CD4-positive, alpha-beta T cell (primary cell): ENCODE measurements at regions of chr14 and their contacts with region 1.

Region 1: GRCh38 chr14:39015360-39015961 is 87.6 kb downstream of the SEC23A start:
- DNase-seq: peak in 4 of 14 experiments; percentile 13 to 50 (median 29)
- ATAC-seq: peak; percentile 55
- H3K4me3 ChIP-seq: no peak overlapping the region
- H3K4me3 Mint-ChIP-seq: no peak overlapping the region
- H3K27ac ChIP-seq: no peak overlapping the region
- H3K27ac Mint-ChIP-seq: no peak overlapping the region
- H3K4me1 ChIP-seq: no peaks in the 10 kb centered on the region
- H3K4me1 Mint-ChIP-seq: no peaks in the 10 kb centered on the region
- H3K27me3 ChIP-seq: no peaks in the 10 kb centered on the region
- H3K27me3 Mint-ChIP-seq: no peaks in the 10 kb centered on the region
- CTCF ChIP-seq: peak; percentile 68

Region 2: GRCh38 chr14:37246427-37246914 is 1769.0 kb before region 1 on chr14:
- CTCF ChIA-PET with region 1: no interaction called
- POLR2A ChIA-PET with region 1: no interaction called
- intact Hi-C with region 1: loop called (anchors 10 kb)
- DNase-seq: peak in 3 of 14 experiments; percentile 24 to 28 (median 25)
- ATAC-seq: no peak
- H3K4me3 ChIP-seq: no peak overlapping the region
- H3K4me3 Mint-ChIP-seq: no peak overlapping the region
- H3K27ac ChIP-seq: no peak overlapping the region
- H3K27ac Mint-ChIP-seq: no peak overlapping the region
- H3K4me1 ChIP-seq: no peaks in the 10 kb centered on the region
- H3K4me1 Mint-ChIP-seq: no peaks in the 10 kb centered on the region
- H3K27me3 ChIP-seq: no peaks in the 10 kb centered on the region
- H3K27me3 Mint-ChIP-seq: no peaks in the 10 kb centered on the region
- CTCF ChIP-seq: peak; percentile 68

Region 3: DNA sequence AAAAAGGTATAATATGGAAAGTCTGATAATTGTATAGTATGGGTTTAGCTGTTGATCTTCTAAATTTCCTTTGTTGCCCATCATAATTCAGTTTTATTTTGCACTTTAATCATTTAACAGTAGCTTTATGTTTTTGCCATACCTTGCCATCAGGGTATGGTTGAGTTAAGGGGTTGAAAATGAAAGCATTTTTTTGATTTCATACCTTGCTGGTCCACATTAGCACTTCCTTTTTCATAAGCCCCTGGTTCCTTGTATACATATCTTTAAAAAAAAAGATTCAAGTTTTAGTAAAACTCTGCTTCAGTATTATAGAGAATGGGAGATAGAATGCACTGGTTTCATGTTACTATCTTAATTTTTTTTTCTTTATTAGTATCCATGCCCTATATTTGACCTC is 1746.7 kb before region 1 on chr14:
- CTCF ChIA-PET with region 1: no interaction called
- POLR2A ChIA-PET with region 1: no interaction called
- intact Hi-C with region 1: loop called in 1 of 2 experiments (anchors 5 kb)
- DNase-seq: no peak
- ATAC-seq: no peak
- H3K4me3 ChIP-seq: no peak overlapping the region
- H3K4me3 Mint-ChIP-seq: no peak overlapping the region
- H3K27ac ChIP-seq: no peak overlapping the region
- H3K27ac Mint-ChIP-seq: no peak overlapping the region
- H3K4me1 ChIP-seq: no peaks in the 10 kb centered on the region
- H3K4me1 Mint-ChIP-seq: no peaks in the 10 kb centered on the region
- H3K27me3 ChIP-seq: no peaks in the 10 kb centered on the region
- H3K27me3 Mint-ChIP-seq: no peaks in the 10 kb centered on the region
- CTCF ChIP-seq: no peak

Region 4: GRCh38 chr14:37916302-37916701 is 1099.2 kb before region 1 on chr14:
- CTCF ChIA-PET with region 1: no interaction called
- POLR2A ChIA-PET with region 1: no interaction called
- intact Hi-C with region 1: loop called in 1 of 2 experiments (anchors 5 kb)
- DNase-seq: no peak
- ATAC-seq: no peak
- H3K4me3 ChIP-seq: no peak overlapping the region
- H3K4me3 Mint-ChIP-seq: no peak overlapping the region
- H3K27ac ChIP-seq: no peak overlapping the region
- H3K27ac Mint-ChIP-seq: no peak overlapping the region
- H3K4me1 ChIP-seq: no peaks in the 10 kb centered on the region
- H3K4me1 Mint-ChIP-seq: no peaks in the 10 kb centered on the region
- H3K27me3 ChIP-seq: no peaks in the 10 kb centered on the region
- H3K27me3 Mint-ChIP-seq: peaks cover 5% of the 10 kb centered on the region
- CTCF ChIP-seq: no peak

Region 5: DNA sequence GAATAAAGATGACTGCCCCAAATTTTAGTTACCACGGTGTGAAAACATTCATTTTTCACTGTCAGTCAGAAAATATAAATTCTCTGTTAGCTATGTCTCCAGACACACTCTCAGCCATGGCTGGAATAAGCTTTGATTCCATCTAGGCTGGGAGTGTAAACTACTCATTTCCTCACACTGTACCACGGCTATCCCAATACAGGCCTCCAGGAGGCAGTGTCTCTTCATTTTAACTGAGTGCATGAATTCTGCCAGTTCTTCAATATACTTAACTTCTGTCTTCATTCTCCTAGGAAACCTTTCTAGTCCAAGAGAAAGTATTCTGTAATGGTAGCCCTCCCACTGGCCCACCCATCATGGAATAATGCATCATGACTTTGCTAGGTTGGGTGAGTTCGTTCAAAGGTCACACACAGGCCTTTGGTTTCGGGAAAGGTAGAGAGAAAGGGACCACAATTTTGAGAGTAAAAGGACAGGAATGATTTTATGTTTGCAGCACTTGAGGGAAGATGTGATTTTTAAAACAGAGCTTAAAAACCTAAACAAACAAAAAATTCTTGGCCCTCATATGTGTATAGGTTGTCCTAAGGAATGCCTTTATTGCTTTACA is 293.5 kb before region 1 on chr14:
- CTCF ChIA-PET with region 1: no interaction called
- POLR2A ChIA-PET with region 1: no interaction called
- intact Hi-C with region 1: loop called in 1 of 2 experiments (anchors 5 kb)
- DNase-seq: peak in 4 of 14 experiments; percentile 11 to 27 (median 24)
- ATAC-seq: no peak
- H3K4me3 ChIP-seq: no peak overlapping the region
- H3K4me3 Mint-ChIP-seq: no peak overlapping the region
- H3K27ac ChIP-seq: no peak overlapping the region
- H3K27ac Mint-ChIP-seq: no peak overlapping the region
- H3K4me1 ChIP-seq: no peaks in the 10 kb centered on the region
- H3K4me1 Mint-ChIP-seq: no peaks in the 10 kb centered on the region
- H3K27me3 ChIP-seq: no peaks in the 10 kb centered on the region
- H3K27me3 Mint-ChIP-seq: no peaks in the 10 kb centered on the region
- CTCF ChIP-seq: peak; percentile 9

Region 6: GRCh38 chr14:38900887-38901286 is 114.6 kb before region 1 on chr14:
- CTCF ChIA-PET with region 1: no interaction called
- POLR2A ChIA-PET with region 1: no interaction called
- intact Hi-C with region 1: no loop called
- DNase-seq: no peak
- ATAC-seq: no peak
- H3K4me3 ChIP-seq: no peak overlapping the region
- H3K4me3 Mint-ChIP-seq: no peak overlapping the region
- H3K27ac ChIP-seq: no peak overlapping the region
- H3K27ac Mint-ChIP-seq: no peak overlapping the region
- H3K4me1 ChIP-seq: no peaks in the 10 kb centered on the region
- H3K4me1 Mint-ChIP-seq: no peaks in the 10 kb centered on the region
- H3K27me3 ChIP-seq: no peaks in the 10 kb centered on the region
- H3K27me3 Mint-ChIP-seq: no peaks in the 10 kb centered on the region
- CTCF ChIP-seq: no peak

Region 7: DNA sequence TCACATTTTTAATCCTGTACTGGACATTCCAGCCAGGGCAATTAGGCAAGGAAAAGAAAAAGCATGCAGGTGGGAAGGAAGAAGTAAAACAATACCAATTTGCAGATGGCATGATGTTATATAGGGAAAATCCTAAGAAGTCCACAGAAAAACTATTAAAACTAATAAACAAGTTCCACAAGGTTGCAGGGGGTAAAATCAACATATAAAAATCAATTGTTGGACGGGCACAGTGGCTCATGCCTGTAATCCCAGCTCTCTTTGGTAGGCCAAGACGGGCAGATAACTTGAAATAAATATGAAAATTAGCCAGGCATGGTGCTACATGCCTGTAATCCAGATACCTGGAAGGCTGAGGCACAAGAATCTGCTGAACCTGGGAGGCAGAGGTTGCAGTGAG is 55.6 kb after region 1 on chr14:
- CTCF ChIA-PET with region 1: no interaction called
- POLR2A ChIA-PET with region 1: no interaction called
- intact Hi-C with region 1: no loop called
- DNase-seq: no peak
- ATAC-seq: no peak
- H3K4me3 ChIP-seq: no peak overlapping the region
- H3K4me3 Mint-ChIP-seq: no peak overlapping the region
- H3K27ac ChIP-seq: no peak overlapping the region
- H3K27ac Mint-ChIP-seq: no peak overlapping the region
- H3K4me1 ChIP-seq: no peaks in the 10 kb centered on the region
- H3K4me1 Mint-ChIP-seq: peaks cover 5% of the 10 kb centered on the region
- H3K27me3 ChIP-seq: no peaks in the 10 kb centered on the region
- H3K27me3 Mint-ChIP-seq: no peaks in the 10 kb centered on the region
- CTCF ChIP-seq: no peak

Region 8: DNA sequence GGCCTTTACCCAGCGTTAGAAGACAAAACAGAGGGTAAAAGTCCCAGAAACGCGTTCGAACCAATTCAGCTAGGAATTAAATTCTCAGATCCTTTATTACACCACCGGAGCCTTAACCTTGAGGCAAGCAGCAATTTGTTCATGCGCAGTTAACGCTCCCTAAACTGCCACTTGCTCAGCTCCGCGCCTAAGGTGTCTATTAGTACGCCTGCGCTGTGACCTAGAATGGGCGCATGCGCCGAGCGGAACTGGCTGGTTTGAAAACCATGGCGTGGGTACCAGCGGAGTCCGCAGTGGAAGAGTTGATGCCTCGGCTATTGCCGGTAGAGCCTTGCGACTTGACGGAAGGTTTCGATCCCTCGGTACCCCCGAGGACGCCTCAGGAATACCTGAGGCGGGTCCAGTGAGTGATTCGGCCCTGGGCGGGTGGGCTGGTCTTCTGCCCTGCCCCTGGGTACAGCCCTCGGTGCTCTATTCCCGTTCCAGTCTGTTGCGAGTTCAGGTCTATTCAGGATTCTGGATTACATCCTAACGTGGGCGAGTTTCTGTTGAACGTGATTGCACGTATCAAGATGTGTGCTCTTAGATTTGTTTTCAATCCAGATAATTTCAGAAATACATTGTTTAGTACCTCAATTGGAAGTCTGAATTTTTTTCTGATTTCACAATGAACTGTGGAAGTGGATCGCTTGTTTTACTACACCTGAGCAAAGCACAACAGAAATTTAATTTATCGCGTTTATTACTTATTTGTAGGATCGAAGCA is 98.8 kb after region 1 on chr14 and contains the start of gene GEMIN2:
- CTCF ChIA-PET with region 1: no interaction called
- POLR2A ChIA-PET with region 1: no interaction called
- intact Hi-C with region 1: no loop called
- DNase-seq: peak; percentile 85 to 98 (median 92)
- ATAC-seq: peak; percentile 98
- H3K4me3 ChIP-seq: peak within 1 kb of the TSS; percentile 72
- H3K4me3 Mint-ChIP-seq: peak within 1 kb of the TSS; percentile 99
- H3K27ac ChIP-seq: peak within 1 kb of the TSS; percentile 55 to 65
- H3K27ac Mint-ChIP-seq: peak within 1 kb of the TSS; percentile 91
- H3K4me1 ChIP-seq: peaks cover 6% of the 10 kb centered on the region
- H3K4me1 Mint-ChIP-seq: peaks cover 17% of the 10 kb centered on the region
- H3K27me3 ChIP-seq: no peaks in the 10 kb centered on the region
- H3K27me3 Mint-ChIP-seq: no peaks in the 10 kb centered on the region
- CTCF ChIP-seq: no peak
- total RNA-seq, gene GEMIN2: 14.6 to 16.1 TPM